Prostate gland (tissue), 2 donors: ENCODE measurements at regions of chr1 and their contacts with region 1.

Region 1: DNA sequence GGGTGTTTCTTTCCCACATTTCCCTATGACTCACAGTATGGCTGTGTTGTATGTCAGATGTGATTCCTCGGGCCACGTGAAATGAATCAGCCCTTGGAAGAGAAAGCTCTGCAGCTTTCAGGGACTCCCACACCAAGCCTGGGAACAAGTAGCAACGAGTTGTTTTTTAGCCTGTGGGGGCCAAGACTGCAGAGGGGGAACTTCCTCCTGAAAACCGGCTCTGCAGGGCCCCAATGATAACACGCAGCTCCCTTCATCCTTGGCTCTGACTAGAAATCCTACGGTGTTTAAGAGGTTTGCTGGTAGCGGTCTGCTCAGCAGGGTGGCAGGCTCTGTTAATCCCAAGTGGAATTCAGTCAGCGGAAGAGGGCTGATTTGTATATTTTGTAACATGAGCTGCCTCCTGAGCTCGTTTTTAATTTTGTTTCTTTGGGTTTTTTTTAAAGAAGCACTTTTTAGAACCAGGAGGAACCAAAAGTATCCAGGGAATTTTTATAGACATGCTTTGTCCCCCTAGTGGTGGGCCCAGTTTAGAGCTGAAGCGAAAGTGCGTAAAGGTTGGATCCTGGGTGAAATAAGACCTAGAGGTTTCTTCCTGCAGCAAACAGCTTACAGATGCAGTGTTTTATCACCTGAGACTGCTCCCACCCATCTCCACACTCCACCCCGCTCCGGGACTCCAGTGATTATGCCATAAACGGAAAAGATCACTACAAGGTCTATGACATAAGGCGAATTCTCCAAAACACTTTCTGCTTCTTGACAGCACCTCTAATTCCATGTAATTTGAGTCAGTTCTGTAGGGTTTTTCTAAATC is 48.8 kb downstream of the LAMC2 start:
- DNase-seq: peak; percentile 83
- H3K4me3 ChIP-seq: peak overlapping the region; percentile 14 to 24
- H3K27ac ChIP-seq: peak overlapping the region; percentile 68 to 80
- H3K4me1 ChIP-seq: peaks cover 3% of the 10 kb centered on the region
- H3K27me3 ChIP-seq: no peaks in the 10 kb centered on the region
- CTCF ChIP-seq: peak in 3 of 4 experiments; percentile 65 to 72 (median 67)
- POLR2A ChIP-seq: peak; percentile 12

Region 2: GRCh38 chr1:183144752-183145151 is 90.1 kb before region 1 on chr1:
- intact Hi-C with region 1: loop called (anchors 5 kb)
- DNase-seq: no peak
- H3K4me3 ChIP-seq: no peak overlapping the region
- H3K27ac ChIP-seq: no peak overlapping the region
- H3K4me1 ChIP-seq: no peaks in the 10 kb centered on the region
- H3K27me3 ChIP-seq: no peaks in the 10 kb centered on the region
- CTCF ChIP-seq: no peak
- POLR2A ChIP-seq: no peak

Region 3: DNA sequence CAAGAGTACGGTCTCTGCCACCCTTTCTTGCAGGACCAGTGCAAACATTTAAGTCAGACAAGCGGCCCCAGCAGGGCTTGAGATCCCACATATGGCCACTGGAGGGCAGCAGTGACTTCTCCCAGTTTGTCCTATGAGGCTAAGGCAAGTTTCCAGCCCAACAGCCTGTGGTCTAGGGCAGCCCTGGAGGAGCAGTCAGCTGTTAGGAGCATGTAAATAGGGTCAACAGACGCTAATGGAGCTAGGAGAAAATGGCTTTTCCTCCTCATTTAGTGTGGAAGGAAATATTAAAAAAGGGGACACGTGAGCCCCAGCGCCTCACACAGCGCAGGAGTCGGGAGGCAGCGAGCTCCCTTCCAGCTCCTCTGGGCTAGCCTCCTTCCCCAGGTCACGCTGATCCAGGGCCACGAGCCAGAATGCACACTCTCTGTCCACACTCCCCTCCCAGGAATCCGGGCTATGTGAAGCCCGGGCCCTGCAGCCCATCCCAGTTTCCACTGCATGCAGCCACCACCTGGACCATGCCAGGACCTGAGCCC is 46.8 kb after region 1 on chr1:
- intact Hi-C with region 1: no loop called
- DNase-seq: peak; percentile 86
- H3K4me3 ChIP-seq: no peak overlapping the region
- H3K27ac ChIP-seq: peak overlapping the region; percentile 10 to 39
- H3K4me1 ChIP-seq: no peaks in the 10 kb centered on the region
- H3K27me3 ChIP-seq: no peaks in the 10 kb centered on the region
- CTCF ChIP-seq: peak; percentile 67 to 92 (median 88)
- POLR2A ChIP-seq: no peak